CD4-positive, alpha-beta memory T cell (primary cell): ENCODE measurements at regions of chr6 and their contacts with region 1.

Region 1: GRCh38 chr6:143556529-143556928 is 45.0 kb upstream of the FUCA2 start:
- DNase-seq: no peak
- H3K4me3 ChIP-seq: no peak overlapping the region
- H3K4me3 Mint-ChIP-seq: peak overlapping the region in 7 of 8 donors; percentile 11 to 79 (median 43)
- H3K27ac ChIP-seq: no peak overlapping the region
- H3K27ac Mint-ChIP-seq: peak overlapping the region in 6 of 7 donors; percentile 43 to 90 (median 72)
- H3K4me1 ChIP-seq: peaks cover 67% of the 10 kb centered on the region
- H3K4me1 Mint-ChIP-seq: peaks cover 57 to 89% (median 74%) of the 10 kb centered on the region in 4 donors
- H3K27me3 ChIP-seq: no peaks in the 10 kb centered on the region
- H3K27me3 Mint-ChIP-seq: no peaks in the 10 kb centered on the region

Region 2: GRCh38 chr6:143569040-143569439 is 12.5 kb after region 1 on chr6:
- CTCF ChIA-PET with region 1: interaction called, 4 read pairs
- POLR2A ChIA-PET with region 1: interaction called, 4 read pairs
- intact Hi-C with region 1: loop called (anchors 1 kb)
- DNase-seq: peak in 1 of 5 donors; percentile 41
- H3K4me3 ChIP-seq: no peak overlapping the region
- H3K4me3 Mint-ChIP-seq: no peak overlapping the region
- H3K27ac ChIP-seq: no peak overlapping the region
- H3K27ac Mint-ChIP-seq: peak overlapping the region; percentile 7 to 74 (median 40)
- H3K4me1 ChIP-seq: peaks cover 22% of the 10 kb centered on the region
- H3K4me1 Mint-ChIP-seq: peaks cover 29 to 60% (median 38%) of the 10 kb centered on the region in 4 donors
- H3K27me3 ChIP-seq: no peaks in the 10 kb centered on the region
- H3K27me3 Mint-ChIP-seq: no peaks in the 10 kb centered on the region